Thyroid gland (tissue), 4 donors: ENCODE measurements at regions of chr17 and their contacts with region 1.

Region 1: GRCh38 chr17:77494664-77495435 is 354.1 kb downstream of the SEC14L1 start:
- DNase-seq: peak; percentile 81 to 82
- H3K4me3 ChIP-seq: no peak overlapping the region
- H3K27ac ChIP-seq: peak overlapping the region in 1 of 3 donors; percentile 3
- H3K4me1 ChIP-seq: peaks cover 8 to 14% of the 10 kb centered on the region in 2 donors
- H3K27me3 ChIP-seq: no peaks in the 10 kb centered on the region
- CTCF ChIP-seq: peak; percentile 93 to 99 (median 98)
- POLR2A ChIP-seq: no peak

Region 2: DNA sequence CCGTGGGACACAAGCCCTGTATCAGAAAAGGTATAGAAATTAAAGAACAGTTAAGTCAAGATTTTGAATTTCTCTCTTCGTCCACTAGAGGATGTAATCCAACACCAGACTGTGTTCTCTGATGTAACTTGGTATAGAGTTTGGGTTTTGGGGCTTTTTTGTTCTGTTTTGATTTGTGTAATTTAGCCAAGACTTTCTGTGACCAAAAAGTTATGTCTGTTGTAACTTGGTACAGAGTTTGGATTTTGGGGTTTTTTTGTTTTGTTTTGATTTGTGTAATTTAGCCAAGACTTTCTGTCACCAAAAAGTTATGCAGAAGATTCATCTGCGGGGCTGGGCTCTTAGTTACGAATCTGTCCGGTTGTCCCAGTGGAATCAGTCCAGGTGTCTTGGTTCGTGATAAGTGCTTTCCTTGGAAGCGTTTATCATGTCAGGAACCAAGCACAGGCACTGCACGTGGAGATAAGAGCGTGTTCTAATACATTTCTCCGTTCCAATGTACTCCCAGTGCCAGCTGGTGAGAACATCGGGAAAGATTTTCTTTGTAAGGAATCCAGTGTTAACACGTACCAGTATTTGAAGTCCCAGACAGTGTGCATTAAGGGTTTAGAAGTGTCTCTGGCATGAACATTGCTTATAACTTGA is 398.2 kb before region 1 on chr17:
- intact Hi-C with region 1: loop called (anchors 10 kb)
- DNase-seq: no peak
- H3K4me3 ChIP-seq: no peak overlapping the region
- H3K27ac ChIP-seq: peak overlapping the region; percentile 55 to 78 (median 67)
- H3K4me1 ChIP-seq: peaks cover 27 to 34% of the 10 kb centered on the region in 2 donors
- H3K27me3 ChIP-seq: no peaks in the 10 kb centered on the region
- CTCF ChIP-seq: peak; percentile 42 to 93 (median 76)
- POLR2A ChIP-seq: no peak

Region 3: DNA sequence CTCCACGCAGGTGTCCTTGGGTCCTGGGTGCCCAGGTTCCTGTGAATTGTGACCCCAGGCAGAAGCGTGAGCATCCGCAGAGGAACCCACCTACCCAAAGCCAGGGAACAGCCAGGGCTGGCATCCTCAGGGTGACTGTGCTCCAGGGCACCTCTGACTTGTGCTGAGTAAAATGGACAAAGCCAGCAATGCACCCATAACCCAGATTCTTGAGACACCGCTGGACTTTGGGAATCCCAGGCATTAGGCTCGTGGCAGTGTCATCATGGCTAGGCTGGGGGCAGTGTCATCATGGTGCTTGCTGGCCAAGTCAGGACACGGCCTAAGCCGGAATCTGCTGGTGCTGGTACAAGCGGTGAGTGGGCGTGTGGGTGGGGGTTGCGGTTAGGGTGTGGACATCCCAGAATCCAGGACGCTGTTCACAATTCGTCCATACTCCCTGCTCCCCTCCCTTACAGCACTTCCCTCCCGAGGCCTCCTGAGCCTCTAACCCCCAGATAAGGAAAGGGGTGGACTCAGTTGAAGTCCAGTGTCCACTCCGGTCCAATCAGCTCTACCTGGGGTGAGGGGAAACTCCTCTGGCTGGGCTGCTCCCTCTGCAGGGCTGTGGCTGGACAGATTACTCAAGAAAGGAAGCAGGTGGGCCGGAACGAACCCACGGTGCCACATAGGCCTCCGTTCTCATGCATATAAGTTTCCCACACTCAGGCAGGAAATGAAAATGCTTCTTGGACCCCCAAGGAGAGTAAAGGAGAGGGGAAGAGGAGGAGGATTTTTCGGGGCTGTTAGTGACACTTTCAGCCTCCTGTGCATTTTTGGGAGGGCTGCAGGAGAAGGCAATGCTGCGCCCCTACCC is 215.2 kb before region 1 on chr17:
- intact Hi-C with region 1: loop called (anchors 10 kb)
- DNase-seq: no peak
- H3K4me3 ChIP-seq: no peak overlapping the region
- H3K27ac ChIP-seq: no peak overlapping the region
- H3K4me1 ChIP-seq: peaks cover 14 to 18% of the 10 kb centered on the region in 2 donors
- H3K27me3 ChIP-seq: no peaks in the 10 kb centered on the region
- CTCF ChIP-seq: no peak
- POLR2A ChIP-seq: no peak

Region 4: GRCh38 chr17:77331301-77331864 is 163.5 kb before region 1 on chr17:
- intact Hi-C with region 1: loop called (anchors 2 kb)
- DNase-seq: peak; percentile 93 to 94
- H3K4me3 ChIP-seq: no peak overlapping the region
- H3K27ac ChIP-seq: peak overlapping the region; percentile 33 to 70 (median 44)
- H3K4me1 ChIP-seq: peaks cover 30 to 32% of the 10 kb centered on the region in 2 donors
- H3K27me3 ChIP-seq: no peaks in the 10 kb centered on the region
- CTCF ChIP-seq: peak; percentile 74 to 97 (median 94)
- POLR2A ChIP-seq: peak in 1 of 2 donors; percentile 25

Region 5: DNA sequence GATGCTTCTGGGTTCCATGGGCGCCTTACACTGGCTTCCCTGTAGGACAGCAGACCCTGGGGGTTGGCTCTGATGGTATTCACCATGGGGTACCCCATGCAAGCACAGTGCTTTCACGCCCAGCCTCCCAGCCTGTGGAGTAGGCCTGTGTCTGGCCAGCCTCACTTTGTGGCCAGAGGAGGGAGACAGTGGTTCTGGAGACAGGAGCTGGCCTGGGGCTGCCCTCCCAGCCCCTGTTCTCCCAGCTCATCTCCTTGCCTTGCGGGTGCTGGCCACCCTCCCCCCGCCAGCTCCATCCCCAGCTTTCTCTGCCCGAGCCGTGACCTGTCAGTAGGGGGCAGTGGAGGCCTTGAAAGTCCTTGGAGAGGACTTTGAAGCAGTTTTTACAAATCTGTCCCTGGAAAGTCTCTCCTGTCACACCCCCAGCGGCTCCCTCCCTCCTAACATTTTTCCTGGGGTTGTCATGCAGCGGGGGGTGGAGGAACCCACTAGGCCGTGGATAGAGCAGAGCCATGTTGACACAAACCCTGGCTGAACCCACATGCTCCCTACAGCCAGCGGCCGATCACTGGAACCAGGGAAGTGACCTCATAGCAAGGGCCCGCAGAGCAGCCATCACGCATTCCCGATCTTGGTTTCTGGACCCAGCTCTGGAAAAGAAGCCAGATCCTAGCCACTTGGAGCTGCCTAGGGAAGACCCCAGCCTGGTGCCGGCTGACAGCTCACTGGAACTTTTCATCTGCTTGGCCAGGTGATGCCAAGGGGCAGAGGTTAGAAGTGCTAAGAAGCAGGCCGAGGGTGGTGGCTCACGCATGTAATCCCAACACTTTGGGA is 64.7 kb before region 1 on chr17:
- intact Hi-C with region 1: loop called (anchors 2 kb)
- DNase-seq: peak; percentile 97 to 98
- H3K4me3 ChIP-seq: no peak overlapping the region
- H3K27ac ChIP-seq: peak overlapping the region; percentile 80 to 83 (median 82)
- H3K4me1 ChIP-seq: peaks cover 34 to 76% of the 10 kb centered on the region in 2 donors
- H3K27me3 ChIP-seq: no peaks in the 10 kb centered on the region
- CTCF ChIP-seq: peak; percentile 47 to 90 (median 83)
- POLR2A ChIP-seq: no peak